Caco-2 (cell line): ENCODE measurements at regions of chr19 and their contacts with region 1.

Region 1: GRCh38 chr19:48123907-48124651 is 13.5 kb upstream of the PLA2G4C start:
- DNase-seq: peak; percentile 64 to 78
- H3K4me3 ChIP-seq: no peak overlapping the region
- H3K4me3 Mint-ChIP-seq: peak overlapping the region; percentile 21
- H3K27ac Mint-ChIP-seq: peak overlapping the region; percentile 58
- H3K4me1 ChIP-seq: peaks cover 16% of the 10 kb centered on the region
- H3K4me1 Mint-ChIP-seq: peaks cover 12% of the 10 kb centered on the region
- H3K27me3 ChIP-seq: no peaks in the 10 kb centered on the region
- H3K27me3 Mint-ChIP-seq: no peaks in the 10 kb centered on the region
- CTCF ChIP-seq: peak; percentile 15 to 36

Region 2: GRCh38 chr19:47765523-47766358 is 358.3 kb before region 1 on chr19:
- CTCF ChIA-PET with region 1: no interaction called
- POLR2A ChIA-PET with region 1: no interaction called
- intact Hi-C with region 1: no loop called
- DNase-seq: peak; percentile 70 to 71
- H3K4me3 ChIP-seq: no peak overlapping the region
- H3K4me3 Mint-ChIP-seq: no peak overlapping the region
- H3K27ac Mint-ChIP-seq: no peak overlapping the region
- H3K4me1 ChIP-seq: no peaks in the 10 kb centered on the region; the same call in 1 of the 2 replicates
- H3K4me1 Mint-ChIP-seq: no peaks in the 10 kb centered on the region
- H3K27me3 ChIP-seq: no peaks in the 10 kb centered on the region
- H3K27me3 Mint-ChIP-seq: peaks cover 2% of the 10 kb centered on the region
- CTCF ChIP-seq: peak; percentile 83 to 88

Region 3: GRCh38 chr19:48110350-48110966 is 13.6 kb before region 1 on chr19 and contains the start of gene PLA2G4C:
- CTCF ChIA-PET with region 1: interaction called, 7 read pairs
- POLR2A ChIA-PET with region 1: interaction called, 8 read pairs
- intact Hi-C with region 1: loop called (anchors 1 kb)
- DNase-seq: peak; percentile 91 to 93
- H3K4me3 ChIP-seq: peak within 1 kb of the TSS; percentile 31
- H3K4me3 Mint-ChIP-seq: peak within 1 kb of the TSS; percentile 73
- H3K27ac Mint-ChIP-seq: no peak within 1 kb of the TSS
- H3K4me1 ChIP-seq: peaks cover 7% of the 10 kb centered on the region
- H3K4me1 Mint-ChIP-seq: peaks cover 8% of the 10 kb centered on the region
- H3K27me3 ChIP-seq: no peaks in the 10 kb centered on the region
- H3K27me3 Mint-ChIP-seq: no peaks in the 10 kb centered on the region
- CTCF ChIP-seq: no peak
- total RNA-seq, gene PLA2G4C: 1.5 and 2.4 TPM in 2 replicates

Region 4: GRCh38 chr19:48135411-48135810 is 11.3 kb after region 1 on chr19:
- CTCF ChIA-PET with region 1: no interaction called
- POLR2A ChIA-PET with region 1: no interaction called
- intact Hi-C with region 1: no loop called
- DNase-seq: no peak
- H3K4me3 ChIP-seq: no peak overlapping the region
- H3K4me3 Mint-ChIP-seq: no peak overlapping the region
- H3K27ac Mint-ChIP-seq: no peak overlapping the region
- H3K4me1 ChIP-seq: no peaks in the 10 kb centered on the region
- H3K4me1 Mint-ChIP-seq: peaks cover 5% of the 10 kb centered on the region
- H3K27me3 ChIP-seq: no peaks in the 10 kb centered on the region
- H3K27me3 Mint-ChIP-seq: no peaks in the 10 kb centered on the region
- CTCF ChIP-seq: no peak

Region 5: DNA sequence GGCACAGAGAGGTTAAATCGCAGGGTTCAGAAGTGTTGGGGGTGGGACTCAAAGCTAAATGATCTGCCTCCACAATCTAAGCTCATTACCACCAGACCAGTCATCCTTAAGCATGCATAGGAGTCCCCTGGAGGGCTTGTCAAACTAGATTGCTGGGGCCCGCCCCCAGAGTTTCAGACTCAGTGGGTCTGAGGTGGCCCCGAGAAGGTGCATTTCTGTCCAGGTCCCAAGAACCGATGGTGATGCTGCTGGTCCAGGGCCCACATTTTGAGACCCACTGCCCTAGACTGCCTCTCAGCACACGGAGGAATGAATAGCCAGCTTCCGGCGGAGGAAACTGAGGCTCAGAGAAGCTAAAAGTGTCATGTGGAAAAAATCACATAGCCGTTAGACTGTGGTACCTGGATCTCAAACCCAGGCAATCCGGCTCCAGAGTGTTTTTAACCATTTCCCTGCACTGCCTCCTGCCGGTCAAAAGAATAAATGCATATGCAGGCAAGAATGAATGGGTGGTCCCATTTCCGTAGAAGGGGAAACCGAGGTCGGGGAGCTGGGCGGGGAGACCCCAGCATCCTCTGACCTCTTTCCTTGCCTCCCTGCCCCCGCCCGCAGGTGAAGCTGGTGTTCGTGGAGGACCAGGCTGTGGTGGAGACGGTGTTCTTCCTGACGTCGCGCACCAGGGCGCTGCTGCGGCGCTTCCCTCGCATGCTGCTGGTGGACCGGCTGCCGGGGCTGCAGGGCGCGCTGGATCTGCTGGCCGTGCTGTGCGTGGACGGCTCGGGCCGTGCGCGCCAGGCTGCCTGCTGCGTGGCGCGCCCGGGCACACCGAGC is 70.2 kb after region 1 on chr19:
- CTCF ChIA-PET with region 1: no interaction called
- POLR2A ChIA-PET with region 1: no interaction called
- intact Hi-C with region 1: no loop called
- DNase-seq: peak in 1 of 2 experiments; percentile 23
- H3K4me3 ChIP-seq: no peak overlapping the region
- H3K4me3 Mint-ChIP-seq: no peak overlapping the region
- H3K27ac Mint-ChIP-seq: no peak overlapping the region
- H3K4me1 ChIP-seq: no peaks in the 10 kb centered on the region
- H3K4me1 Mint-ChIP-seq: no peaks in the 10 kb centered on the region
- H3K27me3 ChIP-seq: no peaks in the 10 kb centered on the region
- H3K27me3 Mint-ChIP-seq: no peaks in the 10 kb centered on the region
- CTCF ChIP-seq: peak; percentile 25 to 69